GM12878 (cell line): ENCODE measurements at regions of chr2 and their contacts with region 1.

Region 1: GRCh38 chr2:219229305-219230058 is at the starts of genes ANKZF1 and ATG9A:
- DNase-seq: peak; percentile 94
- ATAC-seq: peak; percentile 99
- H3K4me3 ChIP-seq: peak within 1 kb of the TSS; percentile 97
- H3K27ac ChIP-seq: peak within 1 kb of the TSS; percentile 87
- H3K4me1 ChIP-seq: peaks cover 15% of the 10 kb centered on the region
- H3K27me3 ChIP-seq: no peaks in the 10 kb centered on the region
- CTCF ChIP-seq: no peak
- EP300 ChIP-seq: no peak
- POLR2A ChIP-seq: peak; percentile 90
- RAD21 ChIP-seq: no peak
- polyA plus RNA-seq, gene ANKZF1: 3.1 to 5.0 TPM
- polyA plus RNA-seq, gene ATG9A: 0.16 TPM in 1 of 2 experiments, not detected in the other

Region 2: DNA sequence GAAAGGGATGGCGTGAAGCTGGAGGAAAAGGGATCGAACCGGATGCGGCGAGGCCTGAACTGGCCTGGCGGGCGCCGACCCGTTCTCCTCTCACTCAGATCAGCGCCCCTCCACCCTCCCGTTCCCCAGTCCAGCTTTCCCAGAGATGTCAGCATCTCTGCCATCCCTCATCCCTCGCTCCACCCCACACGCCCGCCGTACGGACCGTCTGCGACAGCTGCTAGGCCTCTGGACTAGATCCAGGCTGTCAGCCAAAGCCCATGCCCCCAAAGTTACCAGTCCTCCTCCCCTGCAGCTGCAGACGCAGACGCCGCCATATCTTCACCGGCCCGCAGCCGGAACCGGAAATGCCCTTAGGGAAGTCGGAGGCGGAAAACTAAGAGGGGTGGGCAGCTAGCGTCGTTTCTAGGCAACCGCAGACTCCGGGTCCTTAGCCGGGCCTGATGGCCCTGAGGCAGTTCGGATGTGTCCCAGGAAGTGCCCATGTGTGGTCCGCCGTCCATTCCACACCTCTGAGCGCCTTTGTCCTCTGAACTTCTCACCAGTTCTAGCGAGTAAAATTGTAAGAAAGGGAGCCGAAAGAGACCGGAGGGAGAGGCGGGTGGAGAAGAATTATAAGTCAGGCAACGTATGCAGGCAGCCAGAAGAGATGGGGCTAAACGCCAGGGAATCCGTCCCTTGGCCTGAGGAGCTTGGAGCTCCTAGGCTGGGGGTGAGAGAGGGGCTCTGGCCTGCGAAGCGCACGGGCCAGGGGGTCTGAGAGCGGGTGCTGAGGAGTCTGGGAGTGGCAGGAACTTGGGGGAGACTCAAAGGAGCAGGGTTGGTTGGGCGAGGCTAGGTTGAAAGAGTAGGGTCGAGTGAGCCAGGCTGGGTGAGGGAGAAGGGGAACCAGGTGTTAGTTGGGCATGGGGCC is 557.6 kb before region 1 on chr2 and contains the starts of genes RNF25 and STK36:
- CTCF ChIA-PET with region 1: no interaction called
- POLR2A ChIA-PET with region 1: no interaction called
- RAD21 ChIA-PET with region 1: no interaction called
- SMC1A ChIA-PET with region 1: no interaction called
- in situ Hi-C with region 1: no loop called
- intact Hi-C with region 1: no loop called
- DNase-seq: peak; percentile 42
- ATAC-seq: peak; percentile 99
- H3K4me3 ChIP-seq: peak within 1 kb of the TSS; percentile 98
- H3K27ac ChIP-seq: peak within 1 kb of the TSS; percentile 82
- H3K4me1 ChIP-seq: 0 out of 2 replicates have a peak, but pooled peaks cover 6% of the 10 kb centered on the region
- H3K27me3 ChIP-seq: no peaks in the 10 kb centered on the region
- CTCF ChIP-seq: no peak
- EP300 ChIP-seq: no peak
- POLR2A ChIP-seq: peak; percentile 88
- RAD21 ChIP-seq: no peak
- polyA plus RNA-seq, gene RNF25: 1.3 to 6.9 TPM
- polyA plus RNA-seq, gene STK36: 4.0 to 7.3 TPM

Region 3: DNA sequence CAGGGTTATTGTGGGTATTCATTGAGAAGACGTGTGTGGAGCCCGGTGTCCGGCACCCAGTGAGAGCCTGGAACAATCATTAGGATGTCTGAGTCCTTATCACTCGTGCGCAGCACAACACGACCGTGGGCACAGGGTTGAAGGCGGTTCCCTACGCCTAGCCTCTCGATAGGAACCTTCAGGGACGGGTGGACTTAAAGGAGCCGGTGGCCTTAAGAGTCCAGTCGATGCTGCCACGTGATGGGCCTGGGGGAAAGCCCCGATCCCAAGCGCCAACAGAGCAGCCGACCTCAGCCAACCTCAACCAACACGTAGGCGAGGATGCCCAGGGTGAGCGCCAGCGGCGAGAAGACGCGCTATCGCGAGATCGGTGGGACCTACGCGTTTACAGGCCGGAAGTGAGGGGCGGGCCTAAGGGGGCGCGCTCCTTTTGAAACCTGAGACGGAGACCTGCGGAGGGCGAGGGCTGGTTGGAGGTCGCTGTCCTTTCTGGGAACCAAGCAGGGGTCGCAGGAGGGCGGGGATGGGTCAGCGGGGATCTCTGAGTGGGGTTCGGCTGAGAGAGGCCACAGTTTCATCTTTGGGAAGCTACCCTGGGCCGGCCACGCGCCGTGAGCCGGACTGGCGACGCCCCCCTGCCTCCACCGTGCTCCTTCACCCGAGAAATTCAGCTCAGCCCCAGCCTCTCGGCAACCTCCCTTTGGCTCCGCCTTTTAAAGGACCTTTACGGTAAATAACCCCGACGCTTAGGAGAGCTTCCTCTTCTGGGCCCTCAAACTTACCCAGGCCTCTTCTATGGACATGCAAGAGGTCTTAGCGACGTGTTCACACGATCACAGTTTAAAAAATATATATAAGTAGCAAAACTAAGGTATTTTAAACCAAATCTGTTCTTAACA is 320.5 kb before region 1 on chr2:
- CTCF ChIA-PET with region 1: no interaction called
- POLR2A ChIA-PET with region 1: no interaction called
- RAD21 ChIA-PET with region 1: no interaction called
- SMC1A ChIA-PET with region 1: no interaction called
- in situ Hi-C with region 1: no loop called
- intact Hi-C with region 1: no loop called
- DNase-seq: peak; percentile 89
- ATAC-seq: peak; percentile 97
- H3K4me3 ChIP-seq: peak overlapping the region; percentile 73
- H3K27ac ChIP-seq: peak overlapping the region; percentile 63
- H3K4me1 ChIP-seq: peaks cover 8% of the 10 kb centered on the region
- H3K27me3 ChIP-seq: no peaks in the 10 kb centered on the region
- CTCF ChIP-seq: no peak
- EP300 ChIP-seq: 0 out of 4 replicates have a peak, but pooled peaks of 1 of the 2 experiments have one; percentile 22
- POLR2A ChIP-seq: peak; percentile 70; the same call in 1 of the 2 replicates
- RAD21 ChIP-seq: no peak

Region 4: DNA sequence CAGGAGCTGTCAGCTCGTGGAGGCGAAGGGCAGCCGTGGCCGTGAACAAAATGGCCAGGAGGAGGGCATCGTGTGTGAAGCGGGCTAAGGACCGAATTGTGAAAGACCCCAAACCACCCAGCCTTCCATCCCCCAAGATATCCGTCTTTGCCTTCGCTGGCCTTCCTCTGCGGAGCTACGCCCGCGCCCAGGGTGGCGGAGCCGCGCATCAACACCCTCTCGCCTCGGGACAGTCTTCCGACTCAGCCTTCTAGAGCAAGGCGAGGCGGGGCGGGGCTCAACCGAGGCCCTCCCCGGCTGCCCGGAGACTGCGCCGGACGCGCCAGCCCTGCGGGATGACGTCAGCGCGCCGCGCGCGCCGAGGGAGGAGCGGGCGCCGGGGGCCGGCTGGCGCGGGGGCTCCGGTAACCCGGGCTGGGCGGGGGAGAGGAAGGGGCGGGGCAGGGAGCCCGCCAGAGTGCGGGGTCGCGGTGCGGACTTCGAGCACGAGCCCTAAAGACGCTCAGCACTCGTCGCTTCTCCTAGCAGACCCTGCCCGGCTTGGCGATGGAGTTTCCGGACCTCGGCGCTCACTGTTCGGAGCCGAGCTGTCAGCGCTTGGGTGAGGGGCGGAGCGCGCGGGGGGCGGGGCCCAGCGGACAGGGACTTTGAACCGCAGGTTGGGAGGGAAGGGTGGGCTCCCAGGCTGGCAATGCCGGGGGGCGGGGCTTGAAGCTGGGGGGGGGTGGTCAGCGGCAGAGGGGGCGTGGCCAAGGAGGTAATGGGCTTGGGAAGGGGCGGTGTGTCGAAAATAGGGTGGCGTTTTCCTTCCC is 22.8 kb before region 1 on chr2 and contains the start of gene ZFAND2B:
- CTCF ChIA-PET with region 1: interaction called, 5 read pairs
- POLR2A ChIA-PET with region 1: interaction called, 25 read pairs
- RAD21 ChIA-PET with region 1: interaction called, 3 read pairs
- SMC1A ChIA-PET with region 1: interaction called, 4 read pairs
- in situ Hi-C with region 1: no loop called
- intact Hi-C with region 1: no loop called
- DNase-seq: peak; percentile 52
- ATAC-seq: peak; percentile 99
- H3K4me3 ChIP-seq: peak within 1 kb of the TSS; percentile 50
- H3K27ac ChIP-seq: peak within 1 kb of the TSS; percentile 72
- H3K4me1 ChIP-seq: peaks cover 8% of the 10 kb centered on the region
- H3K27me3 ChIP-seq: no peaks in the 10 kb centered on the region
- CTCF ChIP-seq: peak in 2 of 3 experiments; percentile 9 to 14; a peak in 1 of 6 replicates
- EP300 ChIP-seq: no peak
- POLR2A ChIP-seq: peak; percentile 99
- RAD21 ChIP-seq: no peak
- polyA plus RNA-seq, gene ZFAND2B: 5.4 to 10.7 TPM

Region 5: GRCh38 chr2:219218732-219219701 is 10.5 kb before region 1 on chr2 and contains the start of gene ABCB6:
- CTCF ChIA-PET with region 1: interaction called, 4 read pairs
- POLR2A ChIA-PET with region 1: interaction called, 16 read pairs
- RAD21 ChIA-PET with region 1: interaction called, 11 read pairs
- SMC1A ChIA-PET with region 1: interaction called, 8 read pairs
- in situ Hi-C with region 1: no loop called
- intact Hi-C with region 1: no loop called
- DNase-seq: peak; percentile 63
- ATAC-seq: peak; percentile 92
- H3K4me3 ChIP-seq: peak within 1 kb of the TSS; percentile 92
- H3K27ac ChIP-seq: peak within 1 kb of the TSS; percentile 63
- H3K4me1 ChIP-seq: peaks cover 16% of the 10 kb centered on the region
- H3K27me3 ChIP-seq: no peaks in the 10 kb centered on the region
- CTCF ChIP-seq: no peak
- EP300 ChIP-seq: no peak
- POLR2A ChIP-seq: peak; percentile 95
- RAD21 ChIP-seq: no peak
- polyA plus RNA-seq, gene ABCB6: 2.3 to 10.1 TPM

Region 6: DNA sequence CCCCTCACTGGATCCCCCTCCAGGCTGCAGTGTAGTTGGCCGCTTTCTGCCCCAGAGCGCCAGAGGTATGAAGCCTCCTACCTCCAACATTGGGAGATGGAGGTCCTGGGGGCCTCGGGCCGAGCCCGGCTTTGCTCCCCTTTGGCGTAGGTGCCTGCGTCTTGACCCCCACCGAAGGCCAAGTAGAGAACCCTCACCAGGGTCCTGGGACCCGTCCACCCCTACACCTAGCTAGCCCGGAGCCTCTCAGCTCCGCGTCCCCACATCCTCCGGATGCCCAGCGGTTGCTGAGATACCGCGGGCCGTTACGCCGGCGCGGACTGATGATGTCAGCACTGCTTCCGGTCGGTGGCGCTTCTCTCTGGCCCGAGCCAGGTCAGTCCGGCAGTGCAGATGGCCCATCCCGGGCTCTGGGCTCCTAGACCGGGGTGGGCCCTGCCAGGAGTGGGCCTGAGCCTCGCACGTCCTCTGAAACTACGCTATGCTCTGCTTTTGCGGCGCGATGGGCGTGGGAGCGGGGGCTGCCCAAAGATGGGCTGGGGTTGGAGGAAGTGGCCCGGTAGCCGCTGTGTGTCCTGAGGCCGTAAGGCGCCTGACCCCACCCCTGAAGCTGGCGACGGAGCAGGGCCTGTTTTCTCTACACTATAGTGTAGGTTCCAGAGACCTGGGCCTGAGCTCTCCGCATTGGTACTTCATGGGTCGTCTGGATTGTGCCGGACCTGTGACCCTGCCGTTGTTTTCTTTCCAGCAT is 15.8 kb after region 1 on chr2 and contains the starts of genes GLB1L and STK16:
- CTCF ChIA-PET with region 1: interaction called, 8 read pairs
- POLR2A ChIA-PET with region 1: interaction called, 42 read pairs
- RAD21 ChIA-PET with region 1: interaction called, 14 read pairs
- SMC1A ChIA-PET with region 1: interaction called, 22 read pairs
- in situ Hi-C with region 1: no loop called
- intact Hi-C with region 1: no loop called
- DNase-seq: peak; percentile 75
- ATAC-seq: peak; percentile 83
- H3K4me3 ChIP-seq: peak within 1 kb of the TSS; percentile 90
- H3K27ac ChIP-seq: peak within 1 kb of the TSS; percentile 70
- H3K4me1 ChIP-seq: peaks cover 44% of the 10 kb centered on the region
- H3K27me3 ChIP-seq: no peaks in the 10 kb centered on the region
- CTCF ChIP-seq: no peak
- EP300 ChIP-seq: no peak
- POLR2A ChIP-seq: peak; percentile 96
- RAD21 ChIP-seq: no peak
- polyA plus RNA-seq, gene GLB1L: 0.29 to 1.0 TPM
- polyA plus RNA-seq, gene STK16: 8.4 to 9.0 TPM

Region 7: GRCh38 chr2:219253753-219254590 is 24.5 kb after region 1 on chr2 and contains the start of gene TUBA4A:
- CTCF ChIA-PET with region 1: interaction called, 8 read pairs
- POLR2A ChIA-PET with region 1: interaction called, 45 read pairs
- RAD21 ChIA-PET with region 1: interaction called, 13 read pairs
- SMC1A ChIA-PET with region 1: interaction called, 22 read pairs
- in situ Hi-C with region 1: no loop called
- intact Hi-C with region 1: loop called (anchors 2 kb)
- DNase-seq: no peak
- ATAC-seq: peak; percentile 83
- H3K4me3 ChIP-seq: peak within 1 kb of the TSS; percentile 86
- H3K27ac ChIP-seq: peak within 1 kb of the TSS; percentile 77
- H3K4me1 ChIP-seq: peaks cover 22% of the 10 kb centered on the region
- H3K27me3 ChIP-seq: no peaks in the 10 kb centered on the region
- CTCF ChIP-seq: no peak
- EP300 ChIP-seq: 0 out of 4 replicates have a peak, but pooled peaks of 1 of the 2 experiments have one; percentile 23
- POLR2A ChIP-seq: peak; percentile 97
- RAD21 ChIP-seq: no peak
- polyA plus RNA-seq, gene TUBA4A: 58.2 to 88.6 TPM